ENCODE measurements at regions of chrX and their contacts with region 1.

Region 1: DNA sequence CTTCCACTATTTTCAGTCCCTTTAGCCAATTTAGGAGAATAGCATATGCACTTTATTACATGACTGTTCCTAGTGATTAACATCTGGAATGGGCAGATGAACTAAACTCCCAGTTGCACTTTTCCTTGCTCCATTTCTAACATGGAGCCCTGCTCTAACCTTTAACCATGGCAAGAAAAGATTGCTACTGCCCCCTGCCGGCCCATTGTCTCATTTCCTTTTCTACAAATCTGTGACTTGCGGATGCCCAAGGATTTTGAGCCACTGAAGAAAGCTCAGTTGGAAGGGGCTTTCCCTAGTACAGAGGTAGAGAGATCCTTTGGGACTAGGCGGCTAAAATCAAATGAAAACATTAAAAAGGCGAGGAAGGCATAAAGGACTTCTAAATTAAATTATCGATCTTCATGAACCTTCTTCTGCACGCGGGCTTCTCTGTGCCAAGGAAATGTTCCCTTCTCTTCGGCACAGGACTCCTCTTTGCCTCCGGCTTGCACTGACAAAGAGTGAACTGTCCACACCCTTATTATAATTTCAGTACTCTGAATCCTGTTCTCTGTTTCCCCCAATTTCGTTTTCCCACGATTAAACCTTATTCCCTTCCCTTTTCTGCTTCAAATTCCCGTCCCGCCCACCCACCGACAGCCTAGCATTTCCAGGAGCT is 577 bp upstream of the GLRA2 start:
- DNase-seq: peak; percentile 65
- H3K4me3 Mint-ChIP-seq: no peak overlapping the region
- H3K27ac Mint-ChIP-seq: no peak overlapping the region
- H3K4me1 Mint-ChIP-seq: peaks cover 4% of the 10 kb centered on the region
- H3K27me3 Mint-ChIP-seq: peaks cover 2% of the 10 kb centered on the region

Region 2: DNA sequence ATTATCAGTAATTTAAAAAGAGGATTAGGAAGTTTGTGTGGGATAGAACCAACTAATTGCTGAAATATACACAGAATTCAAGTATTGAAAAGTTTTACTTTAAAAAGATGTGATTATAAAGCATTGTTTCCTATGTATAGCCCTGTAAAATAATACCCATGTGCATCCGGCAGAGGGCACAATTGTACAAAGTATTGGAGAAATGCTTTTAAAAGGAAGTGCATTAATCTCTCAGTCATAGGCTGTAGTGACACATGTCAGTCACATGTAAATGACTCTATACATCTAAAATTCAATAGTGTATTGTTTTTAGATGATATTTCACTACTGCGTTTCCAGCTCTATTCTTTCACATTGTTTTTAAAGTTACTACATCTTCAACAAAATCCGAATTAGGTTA is 489.4 kb before region 1 on chrX:
- CTCF ChIA-PET with region 1: no interaction called
- POLR2A ChIA-PET with region 1: no interaction called
- intact Hi-C with region 1: loop called (anchors 5 kb)
- DNase-seq: peak; percentile 58
- H3K4me3 Mint-ChIP-seq: no peak overlapping the region
- H3K27ac Mint-ChIP-seq: no peak overlapping the region
- H3K4me1 Mint-ChIP-seq: no peaks in the 10 kb centered on the region
- H3K27me3 Mint-ChIP-seq: no peaks in the 10 kb centered on the region

Region 3: GRCh38 chrX:14095702-14096101 is 433.1 kb before region 1 on chrX:
- CTCF ChIA-PET with region 1: interaction called, 3 read pairs
- POLR2A ChIA-PET with region 1: no interaction called
- intact Hi-C with region 1: loop called (anchors 1 kb)
- DNase-seq: peak; percentile 50
- H3K4me3 Mint-ChIP-seq: no peak overlapping the region
- H3K27ac Mint-ChIP-seq: no peak overlapping the region
- H3K4me1 Mint-ChIP-seq: no peaks in the 10 kb centered on the region
- H3K27me3 Mint-ChIP-seq: no peaks in the 10 kb centered on the region

Region 4: GRCh38 chrX:15143050-15143824 is 614.5 kb after region 1 on chrX:
- CTCF ChIA-PET with region 1: interaction called, 3 read pairs
- POLR2A ChIA-PET with region 1: no interaction called
- intact Hi-C with region 1: loop called (anchors 10 kb)
- DNase-seq: peak; percentile 59
- H3K4me3 Mint-ChIP-seq: no peak overlapping the region
- H3K27ac Mint-ChIP-seq: no peak overlapping the region
- H3K4me1 Mint-ChIP-seq: peaks cover 15% of the 10 kb centered on the region
- H3K27me3 Mint-ChIP-seq: no peaks in the 10 kb centered on the region

Region 5: GRCh38 chrX:15448010-15448640 is 919.4 kb after region 1 on chrX:
- CTCF ChIA-PET with region 1: no interaction called
- POLR2A ChIA-PET with region 1: no interaction called
- intact Hi-C with region 1: loop called (anchors 10 kb)
- DNase-seq: no peak
- H3K4me3 Mint-ChIP-seq: no peak overlapping the region
- H3K27ac Mint-ChIP-seq: no peak overlapping the region
- H3K4me1 Mint-ChIP-seq: no peaks in the 10 kb centered on the region
- H3K27me3 Mint-ChIP-seq: no peaks in the 10 kb centered on the region